ENCODE measurements at regions of chr4 and their contacts with region 1.

Region 1: GRCh38 chr4:80740375-80740774 is 290.1 kb upstream of the BMP3 start:
- DNase-seq: no peak
- H3K4me3 ChIP-seq: no peak overlapping the region
- H3K27ac ChIP-seq: no peak overlapping the region
- H3K4me1 ChIP-seq: no peaks in the 10 kb centered on the region
- H3K27me3 ChIP-seq: no peaks in the 10 kb centered on the region
- CTCF ChIP-seq: no peak
- POLR2A ChIP-seq: no peak

Region 2: GRCh38 chr4:80694171-80694570 is 46.2 kb before region 1 on chr4:
- intact Hi-C with region 1: loop called (anchors 2 kb)
- DNase-seq: no peak
- H3K4me3 ChIP-seq: no peak overlapping the region
- H3K27ac ChIP-seq: no peak overlapping the region
- H3K4me1 ChIP-seq: no peaks in the 10 kb centered on the region
- H3K27me3 ChIP-seq: no peaks in the 10 kb centered on the region
- CTCF ChIP-seq: no peak
- POLR2A ChIP-seq: no peak

Region 3: DNA sequence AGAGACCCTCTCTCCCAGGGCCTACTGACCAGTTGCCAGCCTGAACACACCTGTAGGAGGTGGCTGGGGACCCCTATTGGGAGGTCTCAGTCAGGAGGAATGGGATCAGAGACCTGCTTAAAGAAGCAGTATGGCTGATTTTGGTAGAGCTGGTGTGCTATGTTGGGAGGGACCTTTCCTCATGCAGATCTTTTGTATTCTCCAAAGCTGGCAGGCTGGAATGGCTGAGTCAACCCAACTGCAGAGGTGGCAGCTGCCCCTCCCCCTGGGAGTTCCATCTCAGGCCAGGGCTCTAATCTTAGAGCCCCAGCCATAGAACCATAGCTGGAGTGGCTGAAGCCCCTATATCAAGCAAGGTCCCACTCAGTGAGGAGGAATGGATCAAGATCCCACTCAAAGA is 10.8 kb after region 1 on chr4:
- intact Hi-C with region 1: no loop called
- DNase-seq: no peak
- H3K4me3 ChIP-seq: no peak overlapping the region
- H3K27ac ChIP-seq: no peak overlapping the region
- H3K4me1 ChIP-seq: no peaks in the 10 kb centered on the region
- H3K27me3 ChIP-seq: no peaks in the 10 kb centered on the region
- CTCF ChIP-seq: no peak
- POLR2A ChIP-seq: no peak

Measured in breast epithelium (tissue), 4 donors.